K562 (cell line): ENCODE measurements at regions of chr14 and their contacts with region 1.

Region 1: DNA sequence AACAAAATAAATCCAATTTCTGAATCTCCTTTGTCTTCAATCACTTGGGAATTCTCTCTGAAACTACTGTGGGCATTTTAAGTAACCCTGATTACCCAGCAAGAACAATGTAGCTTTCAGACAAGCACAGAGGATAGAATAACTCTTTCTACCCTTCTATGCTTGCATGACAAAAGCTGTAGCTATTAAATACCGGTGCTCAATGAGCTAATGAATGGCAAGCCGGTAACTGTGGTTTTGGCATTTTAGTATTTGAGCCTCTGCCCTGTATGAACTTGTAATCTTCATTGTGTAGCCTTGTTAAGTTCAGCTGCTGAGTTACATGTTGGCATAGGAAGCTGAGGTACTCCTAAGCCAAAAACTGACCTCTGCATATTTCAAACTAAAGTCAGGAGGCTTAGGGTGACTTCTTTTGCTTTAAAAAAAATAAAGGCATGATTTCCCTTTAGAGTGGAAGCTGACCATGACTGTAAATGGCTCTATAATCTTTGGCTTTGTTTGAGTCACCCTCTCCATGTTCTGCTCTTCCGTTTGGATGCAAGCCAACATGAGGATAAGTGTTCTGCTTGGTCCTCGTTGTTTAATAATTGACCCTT is 171.0 kb upstream of the HIF1A start:
- DNase-seq: peak in 1 of 4 experiments; percentile 32
- ATAC-seq: no peak
- H3K4me3 ChIP-seq: no peak overlapping the region
- H3K27ac ChIP-seq: no peak overlapping the region
- H3K4me1 ChIP-seq: peaks cover 4 to 23% of the 10 kb centered on the region in 2 experiments; a peak in 3 of 5 replicates
- H3K27me3 ChIP-seq: no peaks in the 10 kb centered on the region
- CTCF ChIP-seq: no peak
- EP300 ChIP-seq: no peak
- POLR2A ChIP-seq: no peak
- RAD21 ChIP-seq: no peak

Region 2: GRCh38 chr14:61461808-61462275 is 62.5 kb before region 1 on chr14:
- CTCF ChIA-PET with region 1: no interaction called
- POLR2A ChIA-PET with region 1: no interaction called
- in situ Hi-C with region 1: no loop called
- intact Hi-C with region 1: no loop called
- DNase-seq: peak; percentile 43 to 60 (median 54)
- ATAC-seq: peak; percentile 86
- H3K4me3 ChIP-seq: no peak overlapping the region
- H3K27ac ChIP-seq: no peak overlapping the region
- H3K4me1 ChIP-seq: peaks cover 4 to 19% of the 10 kb centered on the region in 2 experiments; a peak in 4 of 5 replicates
- H3K27me3 ChIP-seq: no peaks in the 10 kb centered on the region; a peak in 1 of 5 replicates
- CTCF ChIP-seq: peak; percentile 47 to 65 (median 55); a peak in 5 of 6 replicates
- EP300 ChIP-seq: no peak
- POLR2A ChIP-seq: no peak
- RAD21 ChIP-seq: peak; percentile 78 to 81

Region 3: DNA sequence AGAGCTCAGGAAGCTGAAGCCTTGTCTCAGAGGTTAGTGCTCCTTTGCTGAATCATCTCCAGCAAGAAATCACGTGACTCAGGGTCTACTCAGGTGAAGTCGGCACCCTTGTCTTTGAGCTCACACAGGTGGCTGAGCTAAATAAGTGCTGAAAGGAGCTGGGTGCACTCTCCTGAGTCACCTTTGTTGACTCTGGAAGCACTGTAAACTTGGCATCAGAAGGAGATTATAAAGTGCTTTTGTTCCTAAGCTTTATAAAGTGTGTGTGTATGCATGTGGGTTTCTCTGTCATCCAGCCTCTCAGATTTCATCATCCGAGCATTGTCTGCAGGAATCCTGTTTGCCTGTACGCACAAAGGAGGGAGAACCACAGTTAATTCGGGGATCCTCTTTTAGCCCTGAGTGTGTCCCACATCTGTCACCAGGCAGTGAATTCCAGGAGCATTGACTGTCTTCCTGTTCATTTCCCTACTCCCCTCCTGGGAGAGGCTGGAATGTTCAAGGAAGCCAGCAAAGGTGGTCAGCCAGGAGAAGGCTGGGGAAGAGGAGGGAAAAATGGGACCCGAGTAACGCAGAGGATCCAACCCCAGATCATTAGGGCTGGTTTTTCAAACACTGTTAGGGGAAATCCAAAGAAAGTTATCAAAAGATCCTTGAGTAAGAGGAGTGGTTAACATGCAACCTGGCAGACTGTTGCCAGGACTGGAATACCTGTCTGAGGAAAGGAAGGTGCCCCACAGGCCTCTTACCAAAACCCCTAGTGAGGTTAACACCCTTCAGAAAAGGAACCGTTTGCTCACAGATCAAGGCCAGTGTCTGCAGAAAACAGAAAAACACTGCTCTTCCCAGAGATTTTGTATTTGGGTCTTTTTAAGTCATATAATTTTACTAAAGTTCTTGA is 13.5 kb after region 1 on chr14:
- CTCF ChIA-PET with region 1: no interaction called
- POLR2A ChIA-PET with region 1: interaction called, 10 read pairs
- in situ Hi-C with region 1: no loop called
- intact Hi-C with region 1: no loop called
- DNase-seq: peak in 3 of 4 experiments; percentile 7 to 27 (median 10)
- ATAC-seq: peak; percentile 89
- H3K4me3 ChIP-seq: no peak overlapping the region
- H3K27ac ChIP-seq: no peak overlapping the region
- H3K4me1 ChIP-seq: peaks cover 0 to 11% of the 10 kb centered on the region in 2 experiments; a peak in 2 of 5 replicates
- H3K27me3 ChIP-seq: no peaks in the 10 kb centered on the region
- CTCF ChIP-seq: no peak
- EP300 ChIP-seq: no peak
- POLR2A ChIP-seq: no peak
- RAD21 ChIP-seq: no peak

Region 4: GRCh38 chr14:61710853-61711817 is 186.8 kb after region 1 on chr14:
- CTCF ChIA-PET with region 1: no interaction called
- POLR2A ChIA-PET with region 1: no interaction called
- in situ Hi-C with region 1: no loop called
- intact Hi-C with region 1: no loop called
- DNase-seq: peak in 1 of 4 experiments; percentile 8
- ATAC-seq: peak; percentile 36
- H3K4me3 ChIP-seq: no peak overlapping the region
- H3K27ac ChIP-seq: no peak overlapping the region
- H3K4me1 ChIP-seq: no peaks in the 10 kb centered on the region; a peak in 2 of 5 replicates
- H3K27me3 ChIP-seq: no peaks in the 10 kb centered on the region
- CTCF ChIP-seq: no peak
- EP300 ChIP-seq: no peak
- POLR2A ChIP-seq: no peak
- RAD21 ChIP-seq: no peak